K562 (cell line): ENCODE measurements at regions of chr22 and their contacts with region 1.

Region 1: GRCh38 chr22:22074634-22075381 is 92.2 kb upstream of the TOP3B start:
- DNase-seq: no peak
- ATAC-seq: peak; percentile 12
- H3K4me3 ChIP-seq: no peak overlapping the region
- H3K27ac ChIP-seq: no peak overlapping the region
- H3K4me1 ChIP-seq: peaks cover 0 to 5% of the 10 kb centered on the region in 2 experiments; a peak in 1 of 5 replicates
- H3K27me3 ChIP-seq: peaks cover 37 to 57% of the 10 kb centered on the region in 2 experiments
- CTCF ChIP-seq: no peak
- EP300 ChIP-seq: no peak
- POLR2A ChIP-seq: no peak
- RAD21 ChIP-seq: no peak

Region 2: GRCh38 chr22:22085702-22086500 is 11.1 kb after region 1 on chr22:
- CTCF ChIA-PET with region 1: no interaction called
- POLR2A ChIA-PET with region 1: interaction called, 121 read pairs
- in situ Hi-C with region 1: no loop called
- intact Hi-C with region 1: no loop called
- DNase-seq: peak in 2 of 4 experiments; percentile 68 to 76
- ATAC-seq: peak; percentile 68
- H3K4me3 ChIP-seq: no peak overlapping the region
- H3K27ac ChIP-seq: no peak overlapping the region
- H3K4me1 ChIP-seq: no peaks in the 10 kb centered on the region
- H3K27me3 ChIP-seq: peaks cover 53 to 55% of the 10 kb centered on the region in 2 experiments
- CTCF ChIP-seq: peak in 1 of 3 experiments; percentile 8; a peak in 1 of 6 replicates
- EP300 ChIP-seq: peak; percentile 10; the same call in 1 of the 2 replicates
- POLR2A ChIP-seq: no peak
- RAD21 ChIP-seq: no peak

Region 3: DNA sequence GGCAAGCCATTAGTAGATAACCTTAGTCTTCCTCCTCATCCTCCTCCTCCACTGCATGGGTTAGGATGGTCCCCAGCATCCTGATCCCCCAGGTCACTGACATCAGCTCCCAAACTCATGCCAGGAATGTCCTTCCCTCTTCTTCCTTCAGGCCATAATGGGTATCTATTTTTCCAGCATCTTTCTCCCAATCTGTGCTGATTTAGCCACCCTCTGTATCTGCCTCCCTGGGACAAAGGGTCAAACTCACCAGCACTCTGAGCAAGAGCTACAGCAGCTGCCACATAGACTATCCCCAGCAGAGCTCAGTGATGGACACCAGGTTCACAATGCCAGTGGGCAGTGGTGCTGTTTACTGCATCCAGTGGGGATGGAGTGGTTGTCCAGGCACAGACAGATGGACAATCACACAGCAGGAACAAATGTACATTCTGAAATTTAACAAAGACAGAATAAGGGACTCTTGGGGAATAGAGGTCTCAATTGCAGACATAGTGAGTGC is 23.0 kb after region 1 on chr22:
- CTCF ChIA-PET with region 1: no interaction called
- POLR2A ChIA-PET with region 1: interaction called, 4 read pairs
- in situ Hi-C with region 1: no loop called
- intact Hi-C with region 1: loop called (anchors 2 kb)
- DNase-seq: peak in 1 of 4 experiments; percentile 24
- ATAC-seq: no peak
- H3K4me3 ChIP-seq: no peak overlapping the region
- H3K27ac ChIP-seq: no peak overlapping the region
- H3K4me1 ChIP-seq: peaks cover 0 to 2% of the 10 kb centered on the region in 2 experiments; a peak in 2 of 5 replicates
- H3K27me3 ChIP-seq: peaks cover 50 to 52% of the 10 kb centered on the region in 2 experiments
- CTCF ChIP-seq: no peak
- EP300 ChIP-seq: no peak
- POLR2A ChIP-seq: no peak
- RAD21 ChIP-seq: no peak

Region 4: DNA sequence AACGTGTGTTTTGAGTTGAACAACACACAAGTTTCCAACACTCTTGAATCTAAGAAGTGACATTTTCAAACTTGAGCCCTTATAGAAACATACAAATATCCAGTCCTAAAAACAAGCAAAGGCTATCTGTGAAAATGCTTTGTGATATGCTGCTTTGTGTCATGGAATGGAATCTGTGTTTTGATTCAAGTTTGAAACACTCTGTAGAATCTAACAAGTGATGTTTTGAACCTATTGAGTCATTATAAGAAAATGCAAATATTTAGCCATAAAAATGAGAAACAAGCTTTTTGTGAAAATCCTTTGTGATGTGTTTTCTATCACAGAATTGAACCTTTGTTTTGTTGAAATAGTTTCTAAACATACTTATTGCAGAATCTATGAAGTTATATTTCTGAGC is 64.1 kb after region 1 on chr22:
- CTCF ChIA-PET with region 1: no interaction called
- POLR2A ChIA-PET with region 1: no interaction called
- in situ Hi-C with region 1: no loop called
- intact Hi-C with region 1: no loop called
- DNase-seq: no peak
- ATAC-seq: no peak
- H3K4me3 ChIP-seq: no peak overlapping the region
- H3K27ac ChIP-seq: no peak overlapping the region
- H3K4me1 ChIP-seq: peaks cover 0 to 11% of the 10 kb centered on the region in 2 experiments; a peak in 2 of 5 replicates
- H3K27me3 ChIP-seq: peaks cover 0 to 23% of the 10 kb centered on the region in 2 experiments; a peak in 3 of 5 replicates
- CTCF ChIP-seq: no peak
- EP300 ChIP-seq: no peak
- POLR2A ChIP-seq: no peak
- RAD21 ChIP-seq: no peak

Region 5: DNA sequence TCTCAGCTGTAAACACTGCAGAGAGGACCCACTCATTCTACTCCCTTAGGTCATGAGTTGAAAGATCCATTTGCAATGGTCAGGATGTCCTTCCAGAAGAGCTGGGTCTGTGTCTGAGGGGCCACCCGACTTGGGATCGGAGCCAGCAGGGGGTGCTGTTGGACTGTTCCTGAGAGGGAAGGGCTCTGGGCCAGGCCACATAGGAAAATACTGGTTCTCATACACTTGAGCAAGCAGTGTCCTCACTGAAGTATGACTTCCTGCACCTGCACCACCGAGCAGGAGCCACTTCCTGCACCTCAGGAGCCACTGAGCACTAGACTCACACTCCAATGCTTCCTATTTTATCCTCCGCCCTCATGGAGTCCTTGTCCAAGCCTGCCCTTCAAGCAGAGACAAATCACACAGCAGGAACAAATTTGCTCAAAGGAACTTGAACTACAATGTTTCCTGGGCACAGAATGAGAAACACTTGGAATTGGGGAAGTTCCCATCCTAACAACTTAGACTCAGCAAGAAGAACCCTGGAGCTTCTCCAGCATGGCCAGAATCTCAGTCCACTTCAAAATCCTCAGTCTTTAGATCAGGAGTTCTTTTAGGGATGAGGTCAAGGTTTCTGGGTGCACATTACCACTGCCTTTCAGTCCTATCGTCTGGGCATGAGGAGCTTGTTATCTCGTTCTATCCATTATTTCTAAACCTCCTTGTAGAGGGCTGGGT is 133.2 kb after region 1 on chr22:
- CTCF ChIA-PET with region 1: no interaction called
- POLR2A ChIA-PET with region 1: no interaction called
- in situ Hi-C with region 1: no loop called
- intact Hi-C with region 1: no loop called
- DNase-seq: peak; percentile 96 to 98 (median 98)
- ATAC-seq: peak; percentile 94
- H3K4me3 ChIP-seq: no peak overlapping the region
- H3K27ac ChIP-seq: no peak overlapping the region
- H3K4me1 ChIP-seq: peaks cover 0 to 6% of the 10 kb centered on the region in 2 experiments; a peak in 2 of 5 replicates
- H3K27me3 ChIP-seq: peaks cover 48 to 50% of the 10 kb centered on the region in 2 experiments
- CTCF ChIP-seq: peak in 2 of 3 experiments; percentile 99 to 100; a peak in 4 of 6 replicates
- EP300 ChIP-seq: peak; percentile 38; the same call in 1 of the 2 replicates
- POLR2A ChIP-seq: no peak
- RAD21 ChIP-seq: peak in 1 of 2 experiments; percentile 99; a peak in 2 of 4 replicates

Region 6: DNA sequence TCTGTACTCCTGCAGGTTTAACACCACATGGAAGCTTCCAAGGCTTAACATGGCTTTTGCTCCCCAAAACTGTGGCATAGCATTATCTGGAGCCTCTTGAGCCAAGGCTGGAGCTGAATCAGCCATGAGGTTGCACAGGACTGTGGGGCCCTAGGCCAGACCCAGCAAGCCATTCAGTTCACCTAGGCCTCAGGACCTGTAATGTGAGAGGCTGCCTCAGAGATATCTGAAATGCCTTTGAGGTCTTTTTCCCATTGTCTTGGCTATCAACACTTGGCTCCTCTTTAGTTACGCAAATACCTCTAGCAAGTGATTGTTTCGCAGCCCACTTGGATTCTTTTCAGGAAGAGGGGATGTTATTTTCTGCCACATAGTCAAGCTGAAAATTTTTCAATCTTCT is 241.8 kb after region 1 on chr22:
- CTCF ChIA-PET with region 1: no interaction called
- POLR2A ChIA-PET with region 1: no interaction called
- in situ Hi-C with region 1: no loop called
- intact Hi-C with region 1: no loop called
- DNase-seq: no peak
- ATAC-seq: no peak
- H3K4me3 ChIP-seq: no peak overlapping the region
- H3K27ac ChIP-seq: no peak overlapping the region
- H3K4me1 ChIP-seq: no peaks in the 10 kb centered on the region
- H3K27me3 ChIP-seq: no peaks in the 10 kb centered on the region
- CTCF ChIP-seq: no peak
- EP300 ChIP-seq: no peak
- POLR2A ChIP-seq: no peak
- RAD21 ChIP-seq: no peak